HEK293 (cell line): ENCODE measurements at regions of chr9 and their contacts with region 1.

Region 1: DNA sequence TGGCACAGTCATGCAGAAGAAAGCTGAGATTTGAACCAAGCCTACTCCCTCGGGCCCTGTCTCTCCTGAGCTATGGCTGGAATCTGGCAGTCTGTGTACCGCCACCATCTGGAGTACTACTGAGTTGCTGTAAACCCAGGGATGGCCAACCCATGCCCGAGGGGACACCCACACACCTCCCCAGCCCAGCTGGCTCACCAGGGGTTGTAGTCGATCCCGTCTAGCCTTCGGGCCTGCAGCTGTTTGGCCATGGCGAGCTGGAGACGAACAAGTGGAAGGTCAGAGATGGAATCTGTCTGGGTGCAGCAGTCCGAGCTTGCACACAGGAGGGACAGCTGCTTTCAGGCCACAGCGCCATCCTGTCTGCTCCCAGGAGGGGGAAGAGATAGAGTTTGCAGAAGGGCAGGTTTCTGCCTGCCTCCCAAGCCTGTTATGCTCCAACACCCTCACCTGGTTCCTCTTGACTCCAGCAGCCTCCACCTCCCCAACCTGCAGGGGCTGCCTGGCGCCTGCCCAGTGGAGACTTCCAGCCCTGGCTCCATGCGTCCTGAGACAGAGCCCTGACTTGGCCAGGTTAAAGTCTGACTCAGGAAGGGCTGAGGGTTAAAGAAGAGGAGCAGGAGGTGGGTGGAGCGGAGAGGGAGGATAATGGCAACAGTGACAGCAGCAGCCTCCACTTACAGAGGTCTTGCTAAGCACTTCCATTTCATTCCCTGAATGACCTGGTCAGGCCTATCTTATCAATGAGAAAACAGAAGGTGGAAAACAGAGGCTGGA is 15.7 kb upstream of the SPOUT1 start:
- H3K4me3 ChIP-seq: no peak overlapping the region
- H3K27ac ChIP-seq: no peak overlapping the region
- H3K4me1 ChIP-seq: no peaks in the 10 kb centered on the region
- CTCF ChIP-seq: no peak

Region 2: DNA sequence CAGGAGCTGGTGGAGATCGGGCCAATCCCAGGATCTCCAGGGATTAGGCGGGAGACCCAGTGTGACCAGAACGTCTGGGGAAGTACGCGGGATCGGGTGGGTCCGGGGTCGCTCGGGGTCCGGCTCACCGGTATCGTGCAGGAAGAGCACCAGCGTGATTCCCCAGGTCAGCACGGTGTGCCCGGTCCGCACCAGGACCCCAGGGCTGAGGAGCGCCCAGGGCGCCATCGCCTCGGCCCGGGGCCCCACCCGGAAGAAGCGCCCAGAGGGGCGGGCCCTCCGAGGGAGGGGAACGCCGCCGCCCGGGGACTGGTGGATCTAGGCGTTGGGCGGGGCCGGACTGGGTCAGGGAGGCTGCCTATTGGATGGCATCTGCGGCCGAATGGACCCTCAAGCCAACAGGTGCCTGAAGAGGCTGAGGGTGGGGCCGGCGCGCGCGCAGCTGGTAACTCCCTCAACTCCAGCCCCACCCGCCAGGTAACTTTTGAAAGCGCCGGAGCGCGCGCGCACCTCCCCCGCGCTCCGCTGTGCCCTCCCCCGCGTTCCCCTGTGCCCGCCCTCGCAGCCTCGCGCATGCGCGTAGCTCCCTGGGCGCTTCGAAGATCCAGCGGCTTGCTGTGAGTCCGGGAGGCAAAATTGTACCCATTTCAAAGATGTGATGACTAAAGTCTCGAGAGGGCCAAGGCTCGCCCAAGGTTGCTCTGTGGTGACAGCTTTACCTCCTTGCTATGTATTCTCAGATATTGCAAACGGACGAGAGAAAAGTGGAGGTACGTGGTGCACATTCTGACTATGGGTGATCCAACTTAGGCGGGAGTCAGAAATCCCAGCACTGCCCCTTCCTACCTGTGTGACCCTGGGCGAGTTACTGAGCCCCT is 121.2 kb before region 1 on chr9 and contains the start of gene ZDHHC12:
- CTCF ChIA-PET with region 1: no interaction called
- POLR2A ChIA-PET with region 1: interaction called, 10 read pairs
- H3K4me3 ChIP-seq: peak within 1 kb of the TSS; percentile 91
- H3K27ac ChIP-seq: peak within 1 kb of the TSS; percentile 40
- H3K4me1 ChIP-seq: no peaks in the 10 kb centered on the region
- CTCF ChIP-seq: no peak; the same call in 1 of the 2 replicates

Region 3: GRCh38 chr9:128829477-128830251 is 15.7 kb before region 1 on chr9 and contains the start of gene SPOUT1:
- CTCF ChIA-PET with region 1: interaction called, 3 read pairs
- POLR2A ChIA-PET with region 1: interaction called, 12 read pairs
- H3K4me3 ChIP-seq: peak within 1 kb of the TSS; percentile 86
- H3K27ac ChIP-seq: peak within 1 kb of the TSS; percentile 63; the same call in 1 of the 2 replicates
- H3K4me1 ChIP-seq: no peaks in the 10 kb centered on the region
- CTCF ChIP-seq: no peak; the same call in 1 of the 2 replicates

Region 4: GRCh38 chr9:128875790-128876160 is 30.4 kb after region 1 on chr9:
- CTCF ChIA-PET with region 1: interaction called, 10 read pairs
- POLR2A ChIA-PET with region 1: no interaction called
- H3K4me3 ChIP-seq: no peak overlapping the region
- H3K27ac ChIP-seq: no peak overlapping the region
- H3K4me1 ChIP-seq: no peaks in the 10 kb centered on the region
- CTCF ChIP-seq: no peak

Region 5: DNA sequence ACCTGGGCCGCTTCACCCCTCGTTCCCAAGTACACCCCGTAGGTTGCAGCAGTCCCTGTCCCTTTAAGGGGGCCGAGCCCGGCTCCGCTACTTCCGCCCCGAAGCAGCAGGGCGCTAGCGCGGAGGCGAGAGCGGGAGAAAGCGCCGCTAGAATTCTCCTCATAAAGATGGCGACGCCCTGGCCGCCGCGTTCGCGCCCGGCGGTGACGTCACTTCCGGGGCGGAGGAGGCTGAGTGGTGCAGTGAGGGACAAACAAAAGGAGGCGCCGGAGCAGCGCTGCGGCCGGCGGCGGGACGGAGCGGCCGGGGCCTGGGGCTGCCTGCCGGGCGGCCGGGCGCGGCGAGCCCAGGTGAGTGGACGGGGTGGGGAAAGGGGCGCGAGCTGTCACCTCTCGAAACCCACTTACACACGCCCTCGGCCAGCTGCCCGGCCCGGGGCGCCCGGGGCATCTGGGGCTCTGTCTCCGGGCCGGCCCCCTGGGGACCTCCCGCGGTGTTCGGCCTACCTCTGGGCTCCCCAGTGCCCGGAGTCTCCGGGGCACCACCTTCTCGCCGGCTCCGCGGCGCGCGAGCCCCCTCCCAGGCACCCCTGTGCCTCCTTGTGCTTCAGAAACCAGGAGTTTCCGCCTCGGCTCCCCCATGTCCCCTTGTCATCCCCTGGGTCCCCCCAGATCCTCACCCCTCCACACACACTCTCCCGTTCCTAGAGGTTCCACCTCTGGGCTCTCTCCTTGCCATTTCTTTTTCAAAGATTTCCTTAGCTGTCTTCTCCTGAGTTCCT is 36.7 kb after region 1 on chr9 and contains the starts of genes KYAT1 and LRRC8A:
- CTCF ChIA-PET with region 1: interaction called, 10 read pairs
- POLR2A ChIA-PET with region 1: interaction called, 10 read pairs
- H3K4me3 ChIP-seq: peak within 1 kb of the TSS; percentile 87
- H3K27ac ChIP-seq: peak within 1 kb of the TSS; percentile 55
- H3K4me1 ChIP-seq: no peaks in the 10 kb centered on the region
- CTCF ChIP-seq: no peak